ENCODE measurements at regions of chr15 and their contacts with region 1.

Region 1: GRCh38 chr15:67048281-67049279 is 16.8 kb upstream of the SMAD3 start:
- DNase-seq: peak; percentile 86
- H3K4me3 ChIP-seq: no peak overlapping the region
- H3K27ac ChIP-seq: peak overlapping the region; percentile 89
- H3K4me1 ChIP-seq: peaks cover 44% of the 10 kb centered on the region
- H3K27me3 ChIP-seq: no peaks in the 10 kb centered on the region
- CTCF ChIP-seq: no peak

Region 2: DNA sequence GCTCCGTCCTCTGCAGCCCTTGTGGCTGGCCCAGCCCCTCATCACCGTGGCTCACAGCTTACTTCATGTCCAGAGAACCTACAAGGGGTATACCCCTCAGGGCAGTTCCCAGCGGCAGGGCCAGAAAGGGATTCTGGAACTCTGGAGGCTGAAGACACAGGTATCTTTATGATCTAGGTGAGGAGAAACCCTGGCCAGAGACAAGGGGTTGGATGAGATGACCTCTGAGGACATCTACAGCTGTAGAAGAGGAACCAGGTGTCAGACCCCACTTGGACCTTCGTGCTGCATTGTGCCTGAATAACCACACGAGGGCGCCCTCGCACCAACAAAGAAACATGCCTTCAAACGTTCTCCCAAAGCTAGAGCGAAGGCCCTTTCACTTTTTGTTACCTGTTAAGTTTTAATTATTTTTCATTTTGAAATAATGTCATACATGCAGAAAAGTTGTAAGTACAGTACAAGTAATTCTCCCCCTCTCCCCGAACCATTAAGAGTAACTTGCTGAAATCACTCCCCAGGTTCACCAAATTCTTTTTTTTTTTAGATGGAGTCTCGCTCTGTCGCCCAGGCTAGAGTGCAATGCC is 101.9 kb before region 1 on chr15:
- CTCF ChIA-PET with region 1: no interaction called
- dilution Hi-C with region 1: no loop called
- in situ Hi-C with region 1: no loop called
- intact Hi-C with region 1: loop called (anchors 1 kb)
- DNase-seq: peak; percentile 55
- H3K4me3 ChIP-seq: no peak overlapping the region
- H3K27ac ChIP-seq: no peak overlapping the region
- H3K4me1 ChIP-seq: no peaks in the 10 kb centered on the region
- H3K27me3 ChIP-seq: no peaks in the 10 kb centered on the region
- CTCF ChIP-seq: peak; percentile 85 to 94

Region 3: DNA sequence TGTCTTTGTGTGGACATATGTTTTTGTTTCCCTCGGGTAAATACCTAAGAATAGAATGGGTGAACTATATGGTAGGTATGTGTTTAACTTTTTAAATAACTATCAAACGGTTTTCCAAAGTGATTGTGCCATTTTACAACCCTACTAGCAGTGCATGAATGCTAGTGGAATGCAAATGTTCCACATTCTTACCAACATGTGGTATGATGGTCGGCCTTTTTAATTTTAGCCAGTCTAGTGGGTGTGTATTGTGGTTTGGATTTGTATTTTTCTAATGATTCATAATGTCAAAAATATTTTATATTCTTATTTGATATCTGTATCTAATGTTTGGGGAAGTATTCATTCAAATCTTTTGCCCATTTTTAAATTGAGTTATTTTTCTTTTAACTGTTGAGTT is 51.4 kb before region 1 on chr15:
- CTCF ChIA-PET with region 1: no interaction called
- dilution Hi-C with region 1: no loop called
- in situ Hi-C with region 1: no loop called
- intact Hi-C with region 1: no loop called
- DNase-seq: peak; percentile 85
- H3K4me3 ChIP-seq: no peak overlapping the region
- H3K27ac ChIP-seq: no peak overlapping the region
- H3K4me1 ChIP-seq: peaks cover 14% of the 10 kb centered on the region
- H3K27me3 ChIP-seq: no peaks in the 10 kb centered on the region
- CTCF ChIP-seq: no peak

Region 4: GRCh38 chr15:67134067-67134838 is 85.7 kb after region 1 on chr15:
- CTCF ChIA-PET with region 1: no interaction called
- dilution Hi-C with region 1: no loop called
- in situ Hi-C with region 1: no loop called
- intact Hi-C with region 1: no loop called
- DNase-seq: peak; percentile 68
- H3K4me3 ChIP-seq: no peak overlapping the region
- H3K27ac ChIP-seq: peak overlapping the region; percentile 64
- H3K4me1 ChIP-seq: peaks cover 30% of the 10 kb centered on the region
- H3K27me3 ChIP-seq: no peaks in the 10 kb centered on the region
- CTCF ChIP-seq: no peak

Region 5: GRCh38 chr15:67254238-67255175 is 205.9 kb after region 1 on chr15 and contains the starts of genes AAGAB and IQCH:
- CTCF ChIA-PET with region 1: no interaction called
- dilution Hi-C with region 1: no loop called
- in situ Hi-C with region 1: no loop called
- intact Hi-C with region 1: loop called (anchors 5 kb)
- DNase-seq: peak; percentile 99
- H3K4me3 ChIP-seq: peak within 1 kb of the TSS; percentile 66 to 80 (median 78)
- H3K27ac ChIP-seq: peak within 1 kb of the TSS; percentile 98
- H3K4me1 ChIP-seq: no peaks in the 10 kb centered on the region
- H3K27me3 ChIP-seq: no peaks in the 10 kb centered on the region
- CTCF ChIP-seq: no peak
- total RNA-seq, gene AAGAB: 52.2 to 62.5 TPM
- total RNA-seq, gene IQCH: 4.9 to 8.8 TPM

Region 6: GRCh38 chr15:67433495-67434099 is 385.0 kb after region 1 on chr15:
- CTCF ChIA-PET with region 1: no interaction called
- dilution Hi-C with region 1: no loop called
- in situ Hi-C with region 1: no loop called
- intact Hi-C with region 1: loop called (anchors 5 kb)
- DNase-seq: peak; percentile 39
- H3K4me3 ChIP-seq: no peak overlapping the region
- H3K27ac ChIP-seq: no peak overlapping the region
- H3K4me1 ChIP-seq: no peaks in the 10 kb centered on the region
- H3K27me3 ChIP-seq: no peaks in the 10 kb centered on the region
- CTCF ChIP-seq: peak; percentile 79 to 83

Region 7: GRCh38 chr15:67531379-67532059 is 482.9 kb after region 1 on chr15:
- CTCF ChIA-PET with region 1: no interaction called
- dilution Hi-C with region 1: no loop called
- in situ Hi-C with region 1: no loop called
- intact Hi-C with region 1: loop called (anchors 10 kb)
- DNase-seq: peak; percentile 87
- H3K4me3 ChIP-seq: no peak overlapping the region
- H3K27ac ChIP-seq: peak overlapping the region; percentile 50
- H3K4me1 ChIP-seq: peaks cover 12% of the 10 kb centered on the region
- H3K27me3 ChIP-seq: no peaks in the 10 kb centered on the region
- CTCF ChIP-seq: no peak

Measured in mammary epithelial cell (primary cell).